AG04450 (cell line): ENCODE measurements at regions of chr12 and their contacts with region 1.

Region 1: DNA sequence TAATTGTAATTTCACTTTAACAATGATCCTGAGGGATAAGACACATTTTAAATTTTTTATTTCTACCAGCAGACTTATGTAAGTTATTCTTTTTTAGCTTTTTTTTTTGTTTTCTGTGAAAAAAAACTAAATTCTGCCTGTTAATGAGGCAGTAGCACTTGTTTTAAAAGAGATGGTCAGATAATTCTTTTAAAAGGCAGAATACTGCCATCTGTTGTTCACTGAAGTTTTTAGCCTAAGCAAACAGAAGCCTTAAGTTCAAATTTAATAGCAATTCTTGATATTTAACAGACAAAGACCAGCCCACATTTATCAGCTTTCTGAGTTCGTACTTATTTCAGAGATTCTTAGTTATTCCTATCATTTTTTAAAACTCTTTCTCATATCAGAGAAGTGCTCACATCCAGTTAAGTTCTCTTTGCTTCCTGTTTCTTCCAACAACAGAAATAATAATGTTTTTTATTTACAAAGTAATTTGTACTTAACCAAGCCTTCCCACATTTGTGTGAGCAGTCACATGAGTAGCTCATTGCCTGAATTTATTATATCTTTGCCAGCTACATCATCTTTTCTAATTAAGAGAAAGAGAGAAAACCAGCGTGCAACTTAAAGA is 93.4 kb upstream of the SLCO1C1 start:
- DNase-seq: no peak
- H3K4me3 ChIP-seq: no peak overlapping the region
- H3K27ac ChIP-seq: no peak overlapping the region
- H3K27me3 ChIP-seq: no peaks in the 10 kb centered on the region
- CTCF ChIP-seq: peak; percentile 56

Region 2: DNA sequence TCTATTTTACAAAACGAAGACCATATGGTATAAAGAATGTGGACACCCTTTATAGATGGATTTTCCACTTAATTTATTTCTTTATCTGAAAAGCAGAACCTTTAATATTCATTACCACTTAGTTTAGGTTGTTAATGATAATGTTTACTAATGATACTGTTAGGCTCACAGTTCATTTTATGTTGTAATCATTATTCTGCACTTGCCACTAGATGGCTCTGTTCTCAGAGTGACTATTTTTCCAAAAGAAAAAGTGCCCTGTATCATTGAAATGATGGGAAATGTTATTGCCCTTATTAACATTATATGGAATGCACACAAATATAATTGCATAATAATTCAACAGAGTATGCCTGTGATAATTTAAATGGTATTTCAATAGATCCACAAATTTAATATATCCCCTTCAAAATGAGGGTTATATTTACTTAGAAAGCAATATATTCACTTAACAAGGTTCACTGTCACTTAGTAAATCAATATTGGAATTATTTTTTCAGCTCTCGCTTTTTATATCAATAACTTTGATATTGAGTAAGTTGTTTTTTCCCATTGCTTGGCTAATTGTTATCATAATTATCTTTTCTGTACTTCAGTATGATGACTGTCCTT is 137.8 kb before region 1 on chr12:
- CTCF ChIA-PET with region 1: interaction called, 33 read pairs
- POLR2A ChIA-PET with region 1: no interaction called
- DNase-seq: no peak
- H3K4me3 ChIP-seq: no peak overlapping the region
- H3K27ac ChIP-seq: no peak overlapping the region
- H3K27me3 ChIP-seq: no peaks in the 10 kb centered on the region
- CTCF ChIP-seq: peak; percentile 68

Region 3: DNA sequence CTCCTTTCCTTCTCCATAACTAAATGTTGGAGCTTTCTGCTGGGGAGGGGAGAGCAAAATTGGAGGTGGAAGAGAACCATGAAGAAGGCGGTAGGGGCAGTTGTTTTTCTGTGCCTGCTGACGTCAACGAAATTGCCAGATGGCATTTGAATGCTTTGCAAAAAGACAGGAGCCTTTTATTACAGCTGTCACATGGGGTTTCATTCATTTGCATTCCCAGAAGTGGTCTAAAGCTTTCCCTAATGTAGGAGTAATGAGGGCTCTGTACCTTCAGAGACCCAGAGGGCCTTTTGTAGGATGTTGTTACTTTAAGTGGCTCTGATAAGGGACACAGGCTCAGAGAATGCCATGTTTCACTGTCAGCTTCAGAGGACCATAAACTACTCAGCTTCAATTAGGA is 13.7 kb before region 1 on chr12:
- CTCF ChIA-PET with region 1: interaction called, 13 read pairs
- POLR2A ChIA-PET with region 1: no interaction called
- DNase-seq: no peak
- H3K4me3 ChIP-seq: no peak overlapping the region
- H3K27ac ChIP-seq: no peak overlapping the region
- H3K27me3 ChIP-seq: no peaks in the 10 kb centered on the region
- CTCF ChIP-seq: no peak

Region 4: GRCh38 chr12:20620261-20620660 is 18.5 kb after region 1 on chr12:
- CTCF ChIA-PET with region 1: interaction called, 13 read pairs
- POLR2A ChIA-PET with region 1: no interaction called
- DNase-seq: no peak
- H3K4me3 ChIP-seq: no peak overlapping the region
- H3K27ac ChIP-seq: no peak overlapping the region
- H3K27me3 ChIP-seq: no peaks in the 10 kb centered on the region
- CTCF ChIP-seq: no peak

Region 5: DNA sequence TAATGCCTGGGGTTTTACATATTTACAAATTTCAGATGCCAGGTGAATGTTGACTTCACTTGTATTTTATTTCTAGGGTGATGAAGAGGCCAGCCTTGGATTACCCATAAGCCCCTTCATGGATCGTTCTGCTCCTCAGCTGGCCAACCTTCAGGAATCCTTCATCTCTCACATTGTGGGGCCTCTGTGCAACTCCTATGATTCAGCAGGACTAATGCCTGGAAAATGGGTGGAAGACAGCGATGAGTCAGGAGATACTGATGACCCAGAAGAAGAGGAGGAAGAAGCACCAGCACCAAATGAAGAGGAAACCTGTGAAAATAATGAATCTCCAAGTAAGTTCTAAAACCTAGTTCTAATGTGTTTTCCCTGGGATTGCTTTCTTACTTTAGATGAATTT is 52.1 kb after region 1 on chr12:
- CTCF ChIA-PET with region 1: no interaction called
- POLR2A ChIA-PET with region 1: no interaction called
- DNase-seq: no peak
- H3K4me3 ChIP-seq: no peak overlapping the region
- H3K27ac ChIP-seq: no peak overlapping the region
- H3K27me3 ChIP-seq: no peaks in the 10 kb centered on the region
- CTCF ChIP-seq: no peak